CD8-positive, alpha-beta T cell (primary cell): ENCODE measurements at regions of chr1 and their contacts with region 1.

Region 1: DNA sequence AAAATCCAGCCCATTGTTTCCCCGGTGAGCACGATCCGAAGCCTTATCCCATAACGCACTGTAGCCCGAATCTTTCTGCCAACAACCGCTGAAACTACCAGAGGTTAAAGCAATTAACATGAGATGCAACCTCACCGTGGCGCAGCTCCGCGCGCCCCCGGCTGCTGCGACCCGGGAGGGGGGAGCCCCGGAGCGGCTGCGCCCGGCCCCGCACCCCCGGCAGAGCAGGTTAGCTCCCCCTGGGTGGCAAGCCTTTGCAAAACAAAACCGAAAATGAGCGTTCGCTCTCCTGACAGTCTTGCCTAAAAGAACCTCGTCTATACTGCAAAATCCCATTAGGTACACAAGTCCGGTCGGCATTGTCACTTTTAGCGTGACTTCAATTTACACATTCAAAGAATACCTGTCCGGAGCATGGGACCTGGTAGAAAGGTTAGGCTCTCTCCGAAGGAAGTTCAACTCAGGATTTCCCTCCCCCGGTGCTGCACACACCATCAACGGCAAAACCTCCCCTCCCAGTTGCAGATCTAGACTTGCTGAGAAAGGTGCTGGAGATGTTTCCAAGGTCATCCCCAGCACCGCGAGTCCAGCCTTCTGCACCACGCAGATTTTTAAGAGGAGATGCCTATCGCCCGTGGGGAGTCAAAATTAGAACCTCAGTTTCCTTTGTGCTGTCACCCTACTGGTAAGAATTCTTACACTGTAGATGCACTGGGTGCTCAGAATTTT is 107.5 kb downstream of the ZNF281 start:
- DNase-seq: peak; percentile 32 to 84 (median 68)
- ATAC-seq: peak; percentile 97
- H3K4me3 ChIP-seq: peak overlapping the region; percentile 77 to 82
- H3K4me3 Mint-ChIP-seq: peak overlapping the region; percentile 95
- H3K27ac ChIP-seq: peak overlapping the region; percentile 60 to 65
- H3K27ac Mint-ChIP-seq: peak overlapping the region; percentile 93
- H3K4me1 ChIP-seq: peaks cover 17% of the 10 kb centered on the region
- H3K4me1 Mint-ChIP-seq: peaks cover 12% of the 10 kb centered on the region
- H3K27me3 ChIP-seq: no peaks in the 10 kb centered on the region
- H3K27me3 Mint-ChIP-seq: peaks cover 6% of the 10 kb centered on the region
- CTCF ChIP-seq: no peak

Region 2: GRCh38 chr1:199954699-199955098 is 347.7 kb before region 1 on chr1:
- CTCF ChIA-PET with region 1: no interaction called
- POLR2A ChIA-PET with region 1: no interaction called
- intact Hi-C with region 1: no loop called
- DNase-seq: peak in 1 of 9 experiments; percentile 7
- ATAC-seq: no peak
- H3K4me3 ChIP-seq: no peak overlapping the region
- H3K4me3 Mint-ChIP-seq: no peak overlapping the region
- H3K27ac ChIP-seq: no peak overlapping the region
- H3K27ac Mint-ChIP-seq: no peak overlapping the region
- H3K4me1 ChIP-seq: no peaks in the 10 kb centered on the region
- H3K4me1 Mint-ChIP-seq: no peaks in the 10 kb centered on the region
- H3K27me3 ChIP-seq: no peaks in the 10 kb centered on the region
- H3K27me3 Mint-ChIP-seq: peaks cover 4% of the 10 kb centered on the region
- CTCF ChIP-seq: no peak

Region 3: GRCh38 chr1:200139661-200140250 is 162.6 kb before region 1 on chr1:
- CTCF ChIA-PET with region 1: interaction called, 24 read pairs
- POLR2A ChIA-PET with region 1: no interaction called
- intact Hi-C with region 1: loop called (anchors 1 to 2 kb)
- DNase-seq: peak in 3 of 9 experiments; percentile 15 to 70 (median 67)
- ATAC-seq: peak; percentile 74
- H3K4me3 ChIP-seq: no peak overlapping the region
- H3K4me3 Mint-ChIP-seq: no peak overlapping the region
- H3K27ac ChIP-seq: no peak overlapping the region
- H3K27ac Mint-ChIP-seq: no peak overlapping the region
- H3K4me1 ChIP-seq: no peaks in the 10 kb centered on the region
- H3K4me1 Mint-ChIP-seq: no peaks in the 10 kb centered on the region
- H3K27me3 ChIP-seq: no peaks in the 10 kb centered on the region
- H3K27me3 Mint-ChIP-seq: no peaks in the 10 kb centered on the region
- CTCF ChIP-seq: peak; percentile 71

Region 4: GRCh38 chr1:200258447-200259375 is 43.6 kb before region 1 on chr1:
- CTCF ChIA-PET with region 1: interaction called, 3 read pairs
- POLR2A ChIA-PET with region 1: no interaction called
- intact Hi-C with region 1: loop called in 1 of 2 experiments (anchors 1 kb)
- DNase-seq: peak in 3 of 9 experiments; percentile 7 to 44 (median 37)
- ATAC-seq: no peak
- H3K4me3 ChIP-seq: no peak overlapping the region
- H3K4me3 Mint-ChIP-seq: no peak overlapping the region
- H3K27ac ChIP-seq: no peak overlapping the region
- H3K27ac Mint-ChIP-seq: no peak overlapping the region
- H3K4me1 ChIP-seq: no peaks in the 10 kb centered on the region
- H3K4me1 Mint-ChIP-seq: no peaks in the 10 kb centered on the region
- H3K27me3 ChIP-seq: no peaks in the 10 kb centered on the region
- H3K27me3 Mint-ChIP-seq: no peaks in the 10 kb centered on the region
- CTCF ChIP-seq: peak; percentile 35

Region 5: GRCh38 chr1:200351826-200352549 is 49.6 kb after region 1 on chr1:
- CTCF ChIA-PET with region 1: no interaction called
- POLR2A ChIA-PET with region 1: no interaction called
- intact Hi-C with region 1: loop called in 1 of 2 experiments (anchors 5 kb)
- DNase-seq: peak in 4 of 9 experiments; percentile 8 to 58 (median 30)
- ATAC-seq: peak; percentile 75
- H3K4me3 ChIP-seq: peak overlapping the region; percentile 4 to 17
- H3K4me3 Mint-ChIP-seq: peak overlapping the region; percentile 75
- H3K27ac ChIP-seq: peak overlapping the region in 1 of 2 experiments; percentile 53
- H3K27ac Mint-ChIP-seq: peak overlapping the region; percentile 91
- H3K4me1 ChIP-seq: peaks cover 19% of the 10 kb centered on the region
- H3K4me1 Mint-ChIP-seq: peaks cover 23% of the 10 kb centered on the region
- H3K27me3 ChIP-seq: no peaks in the 10 kb centered on the region
- H3K27me3 Mint-ChIP-seq: no peaks in the 10 kb centered on the region
- CTCF ChIP-seq: no peak